ENCODE measurements at regions of chr3 and their contacts with region 1.

Region 1: GRCh38 chr3:128497387-128498126 is 4.6 kb upstream of the GATA2 start:
- DNase-seq: peak; percentile 71 to 72
- H3K4me3 ChIP-seq: peak overlapping the region; percentile 31 to 46
- H3K27ac ChIP-seq: peak overlapping the region; percentile 56 to 69
- H3K4me1 ChIP-seq: peaks cover 0 to 11% of the 10 kb centered on the region in 2 donors
- H3K27me3 ChIP-seq: no peaks in the 10 kb centered on the region
- CTCF ChIP-seq: peak; percentile 62 to 97 (median 76)
- POLR2A ChIP-seq: no peak

Region 2: GRCh38 chr3:128432971-128433704 is 64.4 kb before region 1 on chr3:
- intact Hi-C with region 1: loop called (anchors 2 kb)
- DNase-seq: no peak
- H3K4me3 ChIP-seq: peak overlapping the region in 1 of 2 donors; percentile 21
- H3K27ac ChIP-seq: no peak overlapping the region
- H3K4me1 ChIP-seq: peaks cover 0 to 8% of the 10 kb centered on the region in 2 donors
- H3K27me3 ChIP-seq: no peaks in the 10 kb centered on the region
- CTCF ChIP-seq: no peak
- POLR2A ChIP-seq: no peak